Heart right ventricle (tissue), 16 donors: ENCODE measurements at regions of chr1 and their contacts with region 1.

Region 1: DNA sequence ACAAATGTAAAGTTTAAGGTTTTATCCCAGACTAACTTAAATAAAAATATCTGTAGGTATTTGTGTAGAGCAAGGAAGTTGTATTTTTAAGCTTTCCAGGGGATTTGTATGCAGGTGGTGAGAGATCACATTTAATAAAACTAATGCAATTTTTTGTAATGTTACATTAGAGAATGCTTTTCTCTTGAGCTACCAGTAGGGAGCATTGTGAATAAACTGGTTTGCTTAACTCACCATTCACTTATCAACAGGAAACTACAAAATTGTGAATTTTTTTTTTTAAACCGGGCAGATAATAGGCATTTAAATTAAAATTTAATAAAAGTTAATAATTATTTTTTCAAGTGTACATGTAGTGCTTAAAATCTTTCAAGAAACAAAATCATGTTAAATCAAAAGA is 78.6 kb downstream of the IVNS1ABP start:
- DNase-seq: no peak
- ATAC-seq: no peak
- H3K4me3 ChIP-seq: no peak overlapping the region
- H3K27ac ChIP-seq: no peak overlapping the region
- H3K4me1 ChIP-seq: peaks cover 0 to 14% (median 0%) of the 10 kb centered on the region in 9 donors
- H3K27me3 ChIP-seq: no peaks in the 10 kb centered on the region
- CTCF ChIP-seq: peak; percentile 14 to 64 (median 48)

Region 2: GRCh38 chr1:185404291-185404690 is 165.8 kb after region 1 on chr1:
- intact Hi-C with region 1: no loop called
- DNase-seq: peak; percentile 30 to 43
- ATAC-seq: peak in 4 of 8 donors; percentile 55 to 73 (median 58)
- H3K4me3 ChIP-seq: peak overlapping the region in 4 of 10 donors; percentile 12 to 29 (median 26)
- H3K27ac ChIP-seq: no peak overlapping the region
- H3K4me1 ChIP-seq: peaks cover 0 to 9% (median 0%) of the 10 kb centered on the region in 9 donors
- H3K27me3 ChIP-seq: no peaks in the 10 kb centered on the region
- CTCF ChIP-seq: no peak

Region 3: GRCh38 chr1:185681034-185681633 is 442.7 kb after region 1 on chr1:
- intact Hi-C with region 1: loop called in 6 of 10 experiments (anchors 2 to 10 kb)
- DNase-seq: peak in 1 of 2 donors; percentile 41
- ATAC-seq: peak in 6 of 8 donors; percentile 54 to 77 (median 75)
- H3K4me3 ChIP-seq: no peak overlapping the region
- H3K27ac ChIP-seq: peak overlapping the region in 3 of 10 donors; percentile 28 to 50 (median 46)
- H3K4me1 ChIP-seq: peaks cover 0 to 37% (median 21%) of the 10 kb centered on the region in 9 donors
- H3K27me3 ChIP-seq: no peaks in the 10 kb centered on the region
- CTCF ChIP-seq: peak; percentile 43 to 84 (median 67)